Calu3 (cell line): ENCODE measurements at regions of chr11 and their contacts with region 1.

Region 1: GRCh38 chr11:106076919-106077608 is at the start of gene KBTBD3:
- DNase-seq: peak; percentile 93
- H3K4me3 Mint-ChIP-seq: peak within 1 kb of the TSS; percentile 86
- H3K27ac Mint-ChIP-seq: peak within 1 kb of the TSS; percentile 84
- H3K4me1 Mint-ChIP-seq: peaks cover 17% of the 10 kb centered on the region
- H3K27me3 Mint-ChIP-seq: no peaks in the 10 kb centered on the region
- CTCF ChIP-seq: no peak
- total RNA-seq, gene KBTBD3: 5.0 and 7.1 TPM in 2 replicates

Region 2: DNA sequence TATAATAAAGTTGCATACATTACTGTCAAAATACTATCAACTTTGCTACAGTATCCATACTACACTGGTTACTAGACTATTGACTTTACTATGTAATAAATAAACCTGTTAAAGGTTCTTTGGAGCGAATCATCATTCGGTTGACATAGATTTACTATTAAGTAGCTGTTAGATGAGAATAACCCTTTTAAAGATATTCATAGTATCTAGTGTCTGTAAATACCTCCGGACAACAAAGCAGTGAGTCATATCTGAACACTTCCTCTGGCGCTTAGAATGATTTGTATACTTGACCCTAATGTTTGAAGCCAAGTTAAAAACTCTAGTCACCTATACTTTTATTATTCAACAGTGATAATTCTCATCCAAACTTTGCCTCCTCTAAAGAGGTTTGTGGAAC is 139.7 kb before region 1 on chr11:
- CTCF ChIA-PET with region 1: no interaction called
- intact Hi-C with region 1: loop called (anchors 10 kb)
- DNase-seq: no peak
- H3K4me3 Mint-ChIP-seq: no peak overlapping the region
- H3K27ac Mint-ChIP-seq: no peak overlapping the region
- H3K4me1 Mint-ChIP-seq: peaks cover 25% of the 10 kb centered on the region
- H3K27me3 Mint-ChIP-seq: no peaks in the 10 kb centered on the region
- CTCF ChIP-seq: no peak

Region 3: GRCh38 chr11:106021967-106022794 is 54.9 kb before region 1 on chr11 and contains the start of gene MSANTD4:
- CTCF ChIA-PET with region 1: no interaction called
- intact Hi-C with region 1: loop called (anchors 5 kb)
- DNase-seq: peak; percentile 94
- H3K4me3 Mint-ChIP-seq: peak within 1 kb of the TSS; percentile 99
- H3K27ac Mint-ChIP-seq: peak within 1 kb of the TSS; percentile 96
- H3K4me1 Mint-ChIP-seq: peaks cover 26% of the 10 kb centered on the region
- H3K27me3 Mint-ChIP-seq: no peaks in the 10 kb centered on the region
- CTCF ChIP-seq: no peak
- total RNA-seq, gene MSANTD4: 14.1 and 15.5 TPM in 2 replicates

Region 4: DNA sequence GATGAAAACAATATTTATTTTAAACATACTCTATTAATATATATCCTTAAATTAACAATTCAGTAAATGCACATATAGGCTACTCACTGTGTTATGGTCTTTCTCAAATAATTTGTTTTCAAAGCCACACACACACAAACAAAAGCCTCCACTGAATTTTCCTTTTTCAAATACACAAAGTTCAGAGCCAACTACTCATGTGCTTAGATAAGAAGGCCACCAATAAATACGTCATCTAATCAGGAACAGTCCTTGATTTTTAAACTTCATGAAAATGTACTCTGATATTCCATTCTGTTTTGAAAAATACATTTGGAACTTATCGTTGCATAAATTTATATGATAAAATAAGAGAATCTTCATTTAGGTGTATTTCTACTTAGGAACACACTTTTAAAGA is 26.0 kb before region 1 on chr11:
- CTCF ChIA-PET with region 1: no interaction called
- intact Hi-C with region 1: no loop called
- DNase-seq: no peak
- H3K4me3 Mint-ChIP-seq: no peak overlapping the region
- H3K27ac Mint-ChIP-seq: no peak overlapping the region
- H3K4me1 Mint-ChIP-seq: no peaks in the 10 kb centered on the region
- H3K27me3 Mint-ChIP-seq: no peaks in the 10 kb centered on the region
- CTCF ChIP-seq: no peak

Region 5: DNA sequence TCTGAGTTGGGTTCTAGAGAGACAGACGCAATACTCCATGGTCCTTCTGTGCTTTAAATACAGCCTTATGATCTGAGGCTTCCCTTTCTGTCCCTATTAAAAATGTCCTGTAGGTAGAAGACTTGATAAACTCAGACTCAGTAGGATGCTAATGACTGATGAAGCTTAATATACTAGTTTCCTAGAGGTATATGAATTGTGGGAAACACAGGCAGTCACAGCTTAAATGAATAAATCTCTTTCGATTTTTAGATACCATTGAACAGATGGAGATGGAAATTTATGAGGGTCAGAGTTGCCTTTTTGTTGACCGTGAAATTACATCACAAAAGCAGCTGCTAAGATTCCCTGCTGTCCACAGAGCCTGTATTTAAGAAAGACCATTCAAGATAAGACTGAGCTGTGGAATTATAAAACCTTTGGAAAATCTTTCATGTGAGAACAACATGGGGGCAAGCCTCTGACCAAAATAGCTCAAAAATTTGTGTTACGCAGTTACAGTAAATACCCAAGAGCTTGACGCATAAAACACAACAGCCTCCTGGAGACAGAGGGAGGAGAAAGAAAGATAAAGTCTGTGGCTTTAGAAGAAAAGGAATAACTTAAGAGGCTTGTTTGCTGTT is 172.7 kb after region 1 on chr11:
- CTCF ChIA-PET with region 1: no interaction called
- intact Hi-C with region 1: no loop called
- DNase-seq: no peak
- H3K4me3 Mint-ChIP-seq: no peak overlapping the region
- H3K27ac Mint-ChIP-seq: no peak overlapping the region
- H3K4me1 Mint-ChIP-seq: no peaks in the 10 kb centered on the region
- H3K27me3 Mint-ChIP-seq: no peaks in the 10 kb centered on the region
- CTCF ChIP-seq: no peak